CD4-positive, alpha-beta T cell (primary cell): ENCODE measurements at regions of chr22 and their contacts with region 1.

Region 1: GRCh38 chr22:39954584-39955055 is 5.6 kb upstream of the TMA7B start:
- DNase-seq: no peak
- ATAC-seq: no peak
- H3K4me3 ChIP-seq: no peak overlapping the region
- H3K4me3 Mint-ChIP-seq: no peak overlapping the region
- H3K27ac ChIP-seq: no peak overlapping the region
- H3K27ac Mint-ChIP-seq: no peak overlapping the region
- H3K4me1 ChIP-seq: peaks cover 95% of the 10 kb centered on the region
- H3K4me1 Mint-ChIP-seq: peaks cover 89% of the 10 kb centered on the region
- H3K27me3 ChIP-seq: no peaks in the 10 kb centered on the region
- H3K27me3 Mint-ChIP-seq: no peaks in the 10 kb centered on the region
- CTCF ChIP-seq: no peak

Region 2: GRCh38 chr22:39617342-39617741 is 337.3 kb before region 1 on chr22:
- CTCF ChIA-PET with region 1: no interaction called
- POLR2A ChIA-PET with region 1: no interaction called
- intact Hi-C with region 1: loop called in 1 of 2 experiments (anchors 5 kb)
- DNase-seq: peak in 1 of 14 experiments; percentile 18
- ATAC-seq: no peak
- H3K4me3 ChIP-seq: no peak overlapping the region
- H3K4me3 Mint-ChIP-seq: no peak overlapping the region
- H3K27ac ChIP-seq: no peak overlapping the region
- H3K27ac Mint-ChIP-seq: no peak overlapping the region
- H3K4me1 ChIP-seq: peaks cover 35% of the 10 kb centered on the region
- H3K4me1 Mint-ChIP-seq: peaks cover 49% of the 10 kb centered on the region
- H3K27me3 ChIP-seq: no peaks in the 10 kb centered on the region
- H3K27me3 Mint-ChIP-seq: peaks cover 5% of the 10 kb centered on the region
- CTCF ChIP-seq: no peak

Region 3: DNA sequence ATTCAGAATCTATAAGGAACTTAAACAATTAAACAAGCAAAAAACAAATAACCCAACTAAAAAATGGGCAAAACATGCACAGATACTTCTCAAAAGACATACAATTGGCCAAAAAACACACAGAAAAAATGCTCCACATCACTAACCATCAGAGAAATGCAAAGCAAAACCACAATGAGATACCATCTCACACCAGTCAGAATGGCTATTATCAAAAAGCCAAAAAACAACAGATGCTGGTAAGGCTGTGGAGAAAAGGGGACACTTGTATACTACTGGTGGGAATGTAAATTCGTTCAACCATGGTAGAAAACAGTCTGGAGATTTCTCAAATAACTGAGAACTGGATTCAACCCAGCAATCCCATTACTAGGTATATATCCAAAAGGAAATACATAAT is 85.9 kb before region 1 on chr22:
- CTCF ChIA-PET with region 1: no interaction called
- POLR2A ChIA-PET with region 1: no interaction called
- intact Hi-C with region 1: no loop called
- DNase-seq: no peak
- ATAC-seq: no peak
- H3K4me3 ChIP-seq: no peak overlapping the region
- H3K4me3 Mint-ChIP-seq: no peak overlapping the region
- H3K27ac ChIP-seq: no peak overlapping the region
- H3K27ac Mint-ChIP-seq: no peak overlapping the region
- H3K4me1 ChIP-seq: no peaks in the 10 kb centered on the region
- H3K4me1 Mint-ChIP-seq: no peaks in the 10 kb centered on the region
- H3K27me3 ChIP-seq: no peaks in the 10 kb centered on the region
- H3K27me3 Mint-ChIP-seq: no peaks in the 10 kb centered on the region
- CTCF ChIP-seq: no peak

Region 4: GRCh38 chr22:39994566-39995392 is 40.2 kb after region 1 on chr22 and contains the start of gene FAM83F:
- CTCF ChIA-PET with region 1: no interaction called
- POLR2A ChIA-PET with region 1: interaction called, 12 read pairs
- intact Hi-C with region 1: no loop called
- DNase-seq: peak in 10 of 14 experiments; percentile 6 to 68 (median 40)
- ATAC-seq: peak; percentile 18
- H3K4me3 ChIP-seq: peak within 1 kb of the TSS; percentile 29
- H3K4me3 Mint-ChIP-seq: peak within 1 kb of the TSS; percentile 81
- H3K27ac ChIP-seq: no peak within 1 kb of the TSS
- H3K27ac Mint-ChIP-seq: peak within 1 kb of the TSS; percentile 81
- H3K4me1 ChIP-seq: peaks cover 20% of the 10 kb centered on the region
- H3K4me1 Mint-ChIP-seq: peaks cover 18% of the 10 kb centered on the region
- H3K27me3 ChIP-seq: peaks cover 13 to 17% of the 10 kb centered on the region in 2 experiments
- H3K27me3 Mint-ChIP-seq: peaks cover 27% of the 10 kb centered on the region
- CTCF ChIP-seq: no peak
- total RNA-seq, gene FAM83F: 5.2 to 6.8 TPM

Region 5: GRCh38 chr22:40014667-40015248 is 60.1 kb after region 1 on chr22:
- CTCF ChIA-PET with region 1: no interaction called
- POLR2A ChIA-PET with region 1: no interaction called
- intact Hi-C with region 1: no loop called
- DNase-seq: no peak
- ATAC-seq: no peak
- H3K4me3 ChIP-seq: no peak overlapping the region
- H3K4me3 Mint-ChIP-seq: no peak overlapping the region
- H3K27ac ChIP-seq: no peak overlapping the region
- H3K27ac Mint-ChIP-seq: no peak overlapping the region
- H3K4me1 ChIP-seq: peaks cover 10% of the 10 kb centered on the region
- H3K4me1 Mint-ChIP-seq: peaks cover 7% of the 10 kb centered on the region
- H3K27me3 ChIP-seq: no peaks in the 10 kb centered on the region
- H3K27me3 Mint-ChIP-seq: no peaks in the 10 kb centered on the region
- CTCF ChIP-seq: no peak

Region 6: GRCh38 chr22:40056559-40056958 is 101.9 kb after region 1 on chr22:
- CTCF ChIA-PET with region 1: no interaction called
- POLR2A ChIA-PET with region 1: no interaction called
- intact Hi-C with region 1: no loop called
- DNase-seq: no peak
- ATAC-seq: no peak
- H3K4me3 ChIP-seq: no peak overlapping the region
- H3K4me3 Mint-ChIP-seq: no peak overlapping the region
- H3K27ac ChIP-seq: peak overlapping the region; percentile 72 to 86
- H3K27ac Mint-ChIP-seq: peak overlapping the region; percentile 82
- H3K4me1 ChIP-seq: peaks cover 61% of the 10 kb centered on the region
- H3K4me1 Mint-ChIP-seq: peaks cover 82% of the 10 kb centered on the region
- H3K27me3 ChIP-seq: no peaks in the 10 kb centered on the region
- H3K27me3 Mint-ChIP-seq: no peaks in the 10 kb centered on the region
- CTCF ChIP-seq: no peak

Region 7: DNA sequence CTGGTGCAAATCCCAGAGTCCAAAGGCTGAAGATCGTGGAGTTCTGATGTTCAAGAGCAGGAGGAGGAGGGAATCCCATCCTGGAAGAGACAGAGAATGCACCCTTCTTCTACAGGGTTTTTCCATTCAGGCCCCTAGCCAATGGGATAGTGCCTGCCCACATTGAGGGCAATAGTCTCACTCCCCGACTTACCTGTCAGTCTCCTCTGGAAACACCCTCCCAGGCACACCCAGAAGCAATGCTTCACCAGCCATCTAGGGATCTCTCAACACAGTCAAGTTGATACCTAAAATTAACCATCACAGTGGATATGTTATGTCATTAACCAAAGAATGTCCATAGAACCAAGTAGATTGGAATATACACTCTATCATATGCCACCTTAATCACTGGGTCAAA is 113.0 kb after region 1 on chr22:
- CTCF ChIA-PET with region 1: no interaction called
- POLR2A ChIA-PET with region 1: no interaction called
- intact Hi-C with region 1: no loop called
- DNase-seq: no peak
- ATAC-seq: no peak
- H3K4me3 ChIP-seq: no peak overlapping the region
- H3K4me3 Mint-ChIP-seq: peak overlapping the region; percentile 2
- H3K27ac ChIP-seq: no peak overlapping the region
- H3K27ac Mint-ChIP-seq: peak overlapping the region; percentile 13
- H3K4me1 ChIP-seq: peaks cover 24% of the 10 kb centered on the region
- H3K4me1 Mint-ChIP-seq: peaks cover 91% of the 10 kb centered on the region
- H3K27me3 ChIP-seq: no peaks in the 10 kb centered on the region
- H3K27me3 Mint-ChIP-seq: no peaks in the 10 kb centered on the region
- CTCF ChIP-seq: no peak